IMR-90 (cell line): ENCODE measurements at regions of chrX and their contacts with region 1.

Region 1: GRCh38 chrX:3638280-3638873 is 75.1 kb downstream of the PRKX start:
- DNase-seq: peak; percentile 48
- ATAC-seq: peak; percentile 71
- H3K4me3 ChIP-seq: no peak overlapping the region
- H3K27ac ChIP-seq: no peak overlapping the region
- H3K4me1 ChIP-seq: no peaks in the 10 kb centered on the region
- H3K27me3 ChIP-seq: no peaks in the 10 kb centered on the region
- CTCF ChIP-seq: peak; percentile 61
- POLR2A ChIP-seq: no peak
- RAD21 ChIP-seq: peak; percentile 77

Region 2: GRCh38 chrX:2875798-2876399 is 762.5 kb before region 1 on chrX:
- CTCF ChIA-PET with region 1: no interaction called
- POLR2A ChIA-PET with region 1: no interaction called
- dilution Hi-C with region 1: no loop called
- in situ Hi-C with region 1: loop called (anchors 25 kb)
- intact Hi-C with region 1: no loop called
- DNase-seq: no peak
- ATAC-seq: no peak
- H3K4me3 ChIP-seq: no peak overlapping the region
- H3K27ac ChIP-seq: no peak overlapping the region
- H3K4me1 ChIP-seq: no peaks in the 10 kb centered on the region
- H3K27me3 ChIP-seq: no peaks in the 10 kb centered on the region
- CTCF ChIP-seq: peak; percentile 37
- POLR2A ChIP-seq: no peak
- RAD21 ChIP-seq: 0 out of 2 replicates have a peak, but pooled peaks have one; percentile 21

Region 3: GRCh38 chrX:3026065-3026815 is 612.1 kb before region 1 on chrX:
- CTCF ChIA-PET with region 1: no interaction called
- POLR2A ChIA-PET with region 1: no interaction called
- dilution Hi-C with region 1: no loop called
- in situ Hi-C with region 1: no loop called
- intact Hi-C with region 1: loop called (anchors 5 kb)
- DNase-seq: no peak
- ATAC-seq: no peak
- H3K4me3 ChIP-seq: no peak overlapping the region
- H3K27ac ChIP-seq: no peak overlapping the region
- H3K4me1 ChIP-seq: no peaks in the 10 kb centered on the region
- H3K27me3 ChIP-seq: no peaks in the 10 kb centered on the region
- CTCF ChIP-seq: no peak
- POLR2A ChIP-seq: no peak
- RAD21 ChIP-seq: no peak

Region 4: DNA sequence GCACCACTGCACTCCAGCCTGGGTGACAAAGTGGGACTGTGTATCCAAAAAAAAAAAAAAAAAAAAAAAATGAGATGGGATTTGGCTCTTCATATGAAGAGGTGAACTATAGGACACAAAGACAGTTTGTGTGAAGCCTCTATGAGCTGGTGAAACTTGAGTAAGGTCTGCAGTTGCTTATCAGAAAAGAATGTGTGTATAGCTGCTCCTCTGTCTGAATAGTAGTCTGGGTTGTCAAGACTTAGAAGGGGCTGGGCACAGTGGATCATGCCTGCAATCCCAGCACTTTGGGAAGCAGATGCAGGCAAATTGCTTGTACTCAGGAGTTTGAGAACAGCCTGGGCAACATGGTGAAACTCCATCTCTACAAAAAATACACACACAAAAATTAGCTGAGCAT is 514.3 kb before region 1 on chrX:
- CTCF ChIA-PET with region 1: no interaction called
- POLR2A ChIA-PET with region 1: no interaction called
- dilution Hi-C with region 1: no loop called
- in situ Hi-C with region 1: loop called (anchors 25 kb)
- intact Hi-C with region 1: no loop called
- DNase-seq: peak; percentile 64
- ATAC-seq: peak; percentile 46; the same call in 1 of the 2 replicates
- H3K4me3 ChIP-seq: no peak overlapping the region
- H3K27ac ChIP-seq: no peak overlapping the region
- H3K4me1 ChIP-seq: 0 out of 2 replicates have a peak, but pooled peaks cover 2% of the 10 kb centered on the region
- H3K27me3 ChIP-seq: no peaks in the 10 kb centered on the region
- CTCF ChIP-seq: no peak
- POLR2A ChIP-seq: no peak
- RAD21 ChIP-seq: no peak

Region 5: GRCh38 chrX:3345281-3346191 is 292.8 kb before region 1 on chrX:
- CTCF ChIA-PET with region 1: no interaction called
- POLR2A ChIA-PET with region 1: no interaction called
- dilution Hi-C with region 1: no loop called
- in situ Hi-C with region 1: no loop called
- intact Hi-C with region 1: loop called (anchors 10 kb)
- DNase-seq: no peak
- ATAC-seq: peak; percentile 59
- H3K4me3 ChIP-seq: peak overlapping the region; percentile 39
- H3K27ac ChIP-seq: no peak overlapping the region
- H3K4me1 ChIP-seq: no peaks in the 10 kb centered on the region
- H3K27me3 ChIP-seq: peaks cover 16% of the 10 kb centered on the region
- CTCF ChIP-seq: no peak
- POLR2A ChIP-seq: no peak
- RAD21 ChIP-seq: no peak

Region 6: DNA sequence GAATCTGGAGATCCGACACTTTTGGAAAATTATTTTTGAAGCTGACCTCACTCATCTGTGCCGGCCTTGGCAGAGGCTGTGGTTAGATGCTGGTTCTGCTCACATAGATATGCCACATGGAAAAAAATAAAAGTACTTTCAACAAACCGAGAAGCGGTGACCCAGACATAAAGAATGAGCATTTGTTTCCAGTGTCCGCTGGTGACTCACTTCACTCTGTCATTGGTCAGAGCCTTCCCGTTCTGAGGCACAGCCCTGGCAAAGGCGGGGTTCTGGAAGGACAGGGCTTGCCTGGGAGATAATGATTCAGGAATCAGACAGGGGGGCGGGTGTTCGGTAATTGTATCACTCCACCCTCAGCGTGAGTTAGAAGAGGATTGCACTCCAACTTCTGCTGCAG is 119.5 kb before region 1 on chrX:
- CTCF ChIA-PET with region 1: no interaction called
- POLR2A ChIA-PET with region 1: interaction called, 15 read pairs
- dilution Hi-C with region 1: no loop called
- in situ Hi-C with region 1: no loop called
- intact Hi-C with region 1: no loop called
- DNase-seq: peak; percentile 92
- ATAC-seq: peak; percentile 80
- H3K4me3 ChIP-seq: no peak overlapping the region
- H3K27ac ChIP-seq: peak overlapping the region; percentile 91
- H3K4me1 ChIP-seq: peaks cover 8% of the 10 kb centered on the region
- H3K27me3 ChIP-seq: no peaks in the 10 kb centered on the region
- CTCF ChIP-seq: no peak
- POLR2A ChIP-seq: no peak
- RAD21 ChIP-seq: no peak